ENCODE measurements at regions of chrX and their contacts with region 1.

Region 1: DNA sequence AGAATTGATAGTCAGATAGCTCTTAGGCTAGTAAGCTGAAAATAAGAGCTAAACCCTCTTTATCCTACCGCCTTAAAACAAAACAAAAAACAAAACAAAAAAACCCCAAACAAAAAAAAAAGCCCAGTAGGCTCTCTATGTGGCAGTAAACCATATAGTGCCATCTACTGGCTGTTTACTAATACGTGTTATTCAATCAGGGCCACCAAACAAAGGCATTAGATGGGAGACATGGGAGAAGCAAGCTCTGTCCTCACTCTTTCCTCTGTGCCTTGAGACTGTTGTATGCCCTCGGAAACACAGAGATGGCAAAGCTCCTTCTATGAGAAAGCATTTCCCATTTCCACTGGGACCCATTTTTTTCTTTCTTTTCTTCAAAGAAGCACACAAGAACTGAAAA is 148.8 kb upstream of the MID1 start:
- DNase-seq: no peak
- ATAC-seq: peak; percentile 91
- H3K4me3 Mint-ChIP-seq: peak overlapping the region; percentile 34
- H3K27ac Mint-ChIP-seq: peak overlapping the region; percentile 74; the same call in 1 of the 2 replicates
- H3K4me1 Mint-ChIP-seq: peaks cover 19% of the 10 kb centered on the region
- H3K27me3 Mint-ChIP-seq: peaks cover 9% of the 10 kb centered on the region
- CTCF ChIP-seq: no peak

Region 2: DNA sequence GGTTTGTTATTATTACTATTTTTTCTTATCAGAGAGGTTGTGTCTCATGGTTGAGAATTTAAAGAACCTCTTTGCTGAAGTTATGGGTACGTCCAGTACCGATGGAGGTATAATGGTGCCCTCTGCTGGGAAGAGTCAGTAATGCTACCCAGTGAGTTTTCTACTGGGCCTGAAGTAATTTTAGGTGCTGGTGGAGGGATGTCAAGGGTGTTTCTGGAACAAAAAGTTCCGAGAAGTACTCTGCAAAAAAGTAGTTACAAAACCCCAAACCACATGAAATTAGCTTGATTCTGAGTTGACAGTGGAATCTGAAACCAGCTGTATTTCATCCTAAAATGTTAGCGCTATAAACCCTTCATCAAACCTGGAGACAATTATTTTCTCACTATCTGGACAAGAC is 46.3 kb before region 1 on chrX:
- CTCF ChIA-PET with region 1: interaction called, 28 read pairs
- POLR2A ChIA-PET with region 1: no interaction called
- DNase-seq: peak; percentile 67
- ATAC-seq: peak; percentile 75
- H3K4me3 Mint-ChIP-seq: no peak overlapping the region
- H3K27ac Mint-ChIP-seq: no peak overlapping the region
- H3K4me1 Mint-ChIP-seq: peaks cover 15% of the 10 kb centered on the region
- H3K27me3 Mint-ChIP-seq: no peaks in the 10 kb centered on the region
- CTCF ChIP-seq: peak; percentile 42

Region 3: GRCh38 chrX:10787264-10787663 is 18.1 kb after region 1 on chrX:
- CTCF ChIA-PET with region 1: no interaction called
- POLR2A ChIA-PET with region 1: no interaction called
- DNase-seq: no peak
- ATAC-seq: no peak
- H3K4me3 Mint-ChIP-seq: no peak overlapping the region
- H3K27ac Mint-ChIP-seq: no peak overlapping the region
- H3K4me1 Mint-ChIP-seq: peaks cover under 1% of the 10 kb centered on the region; the same call in 1 of the 2 replicates
- H3K27me3 Mint-ChIP-seq: no peaks in the 10 kb centered on the region
- CTCF ChIP-seq: no peak

Measured in WTC11 (cell line).